Transverse colon (tissue), 4 donors: ENCODE measurements at regions of chr16 and their contacts with region 1.

Region 1: GRCh38 chr16:20611975-20612481 is 35.9 kb upstream of the ACSM2B start:
- DNase-seq: no peak
- H3K4me3 ChIP-seq: no peak overlapping the region
- H3K27ac ChIP-seq: peak overlapping the region in 3 of 4 donors; percentile 25 to 44 (median 42)
- H3K4me1 ChIP-seq: no peaks in the 10 kb centered on the region
- H3K27me3 ChIP-seq: no peaks in the 10 kb centered on the region
- CTCF ChIP-seq: no peak
- EP300 ChIP-seq: no peak
- POLR2A ChIP-seq: no peak

Region 2: GRCh38 chr16:20704281-20704680 is 92.3 kb after region 1 on chr16:
- in situ Hi-C with region 1: loop called in 1 of 4 experiments (anchors 25 kb)
- intact Hi-C with region 1: no loop called
- DNase-seq: no peak
- H3K4me3 ChIP-seq: no peak overlapping the region
- H3K27ac ChIP-seq: peak overlapping the region in 3 of 4 donors; percentile 26 to 63 (median 60)
- H3K4me1 ChIP-seq: peaks cover 0 to 10% (median 0%) of the 10 kb centered on the region in 4 donors
- H3K27me3 ChIP-seq: no peaks in the 10 kb centered on the region
- CTCF ChIP-seq: no peak
- EP300 ChIP-seq: peak; percentile 68
- POLR2A ChIP-seq: no peak